ENCODE measurements at regions of chr2 and their contacts with region 1.

Region 1: DNA sequence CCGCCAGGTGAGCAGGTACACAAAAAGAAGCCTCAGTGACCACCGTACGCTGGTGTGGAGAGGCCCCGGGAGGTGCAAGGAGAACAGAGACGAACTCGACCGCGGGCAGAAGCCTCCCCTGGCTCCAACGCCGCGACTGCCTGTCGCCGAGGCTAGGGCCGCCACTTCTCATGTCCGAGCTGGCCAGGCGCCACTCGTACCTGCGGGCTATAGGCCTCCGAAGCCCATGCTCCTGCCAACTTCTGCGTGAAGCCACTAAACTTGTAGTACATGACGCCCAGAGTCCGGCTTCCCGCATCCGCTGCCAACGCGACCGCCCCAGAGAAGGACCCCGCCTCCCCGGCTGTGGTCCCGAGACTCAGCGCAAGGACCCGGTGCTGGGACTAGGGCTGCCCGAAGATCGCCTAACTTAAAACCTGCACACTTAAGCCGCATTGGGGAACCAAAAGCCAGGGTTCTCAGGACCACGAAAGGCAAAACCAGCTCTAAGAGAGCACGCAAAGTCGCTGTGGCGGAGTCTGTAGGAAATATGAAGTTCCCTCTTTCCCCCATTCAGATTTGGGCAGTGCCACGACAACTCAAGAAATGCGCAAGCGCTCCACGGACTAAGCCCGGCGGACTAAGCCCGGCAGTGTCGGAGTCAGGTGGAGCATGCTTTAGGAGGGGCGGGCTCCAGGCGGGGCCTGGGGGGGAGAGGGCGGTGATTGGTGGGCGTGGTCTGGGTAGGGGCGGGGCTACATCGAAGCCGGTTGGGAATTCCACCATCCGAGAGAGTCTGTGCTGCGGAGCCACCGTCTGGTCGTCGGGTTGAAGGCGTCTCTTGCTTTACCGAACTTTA is at the start of gene COX7A2L:
- DNase-seq: peak; percentile 98
- H3K4me3 Mint-ChIP-seq: peak within 1 kb of the TSS; percentile 83
- H3K27ac Mint-ChIP-seq: peak within 1 kb of the TSS; percentile 98
- H3K4me1 Mint-ChIP-seq: peaks cover 42% of the 10 kb centered on the region
- H3K27me3 Mint-ChIP-seq: no peaks in the 10 kb centered on the region
- total RNA-seq, gene COX7A2L: 150 to 152 TPM

Region 2: GRCh38 chr2:42047488-42048298 is 313.4 kb before region 1 on chr2 and contains the start of gene PKDCC:
- CTCF ChIA-PET with region 1: no interaction called
- intact Hi-C with region 1: loop called (anchors 1 kb)
- DNase-seq: no peak
- H3K4me3 Mint-ChIP-seq: peak within 1 kb of the TSS; percentile 57
- H3K27ac Mint-ChIP-seq: no peak within 1 kb of the TSS
- H3K4me1 Mint-ChIP-seq: peaks cover 5% of the 10 kb centered on the region
- H3K27me3 Mint-ChIP-seq: peaks cover 59% of the 10 kb centered on the region
- total RNA-seq, gene PKDCC: not detected

Region 3: DNA sequence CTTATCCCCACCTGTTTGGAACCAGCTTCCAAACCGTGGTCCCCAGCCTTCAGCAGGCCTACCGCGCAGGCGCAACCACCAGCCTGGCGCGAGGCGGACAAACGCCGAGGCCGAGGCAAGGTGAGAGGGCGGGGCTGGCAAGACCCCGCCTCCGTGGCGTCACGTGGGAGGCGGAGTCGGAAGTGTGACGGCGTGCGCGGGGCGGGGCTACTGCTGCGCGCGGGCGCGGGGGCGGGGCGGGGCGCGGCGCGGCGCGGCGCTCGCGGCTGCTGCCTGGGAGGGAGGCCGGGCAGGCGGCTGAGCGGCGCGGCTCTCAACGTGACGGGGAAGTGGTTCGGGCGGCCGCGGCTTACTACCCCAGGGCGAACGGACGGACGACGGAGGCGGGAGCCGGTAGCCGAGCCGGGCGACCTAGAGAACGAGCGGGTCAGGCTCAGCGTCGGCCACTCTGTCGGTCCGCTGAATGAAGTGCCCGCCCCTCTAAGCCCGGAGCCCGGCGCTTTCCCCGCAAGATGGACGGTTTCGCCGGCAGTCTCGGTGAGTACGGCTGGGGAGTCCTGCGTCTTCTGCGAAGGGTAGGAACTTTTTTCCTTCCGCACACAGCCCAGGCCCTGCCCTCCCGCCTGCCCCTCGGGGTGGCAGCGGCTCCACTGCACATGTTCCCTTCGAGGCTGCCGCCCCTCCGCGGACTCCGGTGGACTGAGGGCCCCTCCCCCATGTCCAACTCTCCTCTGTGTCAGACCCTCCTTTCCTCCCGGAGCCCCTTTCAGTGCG is 191.8 kb before region 1 on chr2 and contains the start of gene EML4:
- CTCF ChIA-PET with region 1: no interaction called
- intact Hi-C with region 1: loop called (anchors 1 kb)
- DNase-seq: peak; percentile 89
- H3K4me3 Mint-ChIP-seq: no peak within 1 kb of the TSS
- H3K27ac Mint-ChIP-seq: peak within 1 kb of the TSS; percentile 70
- H3K4me1 Mint-ChIP-seq: peaks cover 24% of the 10 kb centered on the region
- H3K27me3 Mint-ChIP-seq: no peaks in the 10 kb centered on the region
- total RNA-seq, gene EML4: 65.8 to 65.9 TPM

Region 4: DNA sequence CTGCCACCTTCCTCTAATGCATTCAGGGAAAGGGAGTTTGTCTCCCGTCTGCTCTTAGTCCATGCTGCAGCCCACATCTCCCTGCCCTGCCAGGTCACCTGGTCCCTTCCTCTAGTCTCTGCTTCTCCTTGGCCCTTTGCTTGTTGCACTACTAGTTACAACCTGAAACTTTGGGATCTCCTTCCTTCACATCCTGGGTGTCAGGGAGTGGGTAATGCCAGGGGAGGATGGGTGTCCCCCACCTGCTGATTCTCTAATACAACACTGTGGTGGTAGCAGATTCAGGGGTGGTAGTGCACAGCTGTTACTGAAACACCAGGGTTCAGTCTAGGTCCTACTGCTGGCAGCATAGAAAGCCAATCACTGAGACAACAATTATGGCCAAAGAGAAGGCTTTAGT is 31.1 kb after region 1 on chr2:
- CTCF ChIA-PET with region 1: no interaction called
- intact Hi-C with region 1: no loop called
- DNase-seq: no peak
- H3K4me3 Mint-ChIP-seq: no peak overlapping the region
- H3K27ac Mint-ChIP-seq: no peak overlapping the region
- H3K4me1 Mint-ChIP-seq: no peaks in the 10 kb centered on the region
- H3K27me3 Mint-ChIP-seq: no peaks in the 10 kb centered on the region

Region 5: GRCh38 chr2:42421601-42422252 is 60.6 kb after region 1 on chr2:
- CTCF ChIA-PET with region 1: no interaction called
- intact Hi-C with region 1: loop called (anchors 1 kb)
- DNase-seq: no peak
- H3K4me3 Mint-ChIP-seq: no peak overlapping the region
- H3K27ac Mint-ChIP-seq: no peak overlapping the region
- H3K4me1 Mint-ChIP-seq: peaks cover 29% of the 10 kb centered on the region
- H3K27me3 Mint-ChIP-seq: peaks cover 7% of the 10 kb centered on the region

Region 6: GRCh38 chr2:42663106-42663780 is 302.1 kb after region 1 on chr2:
- CTCF ChIA-PET with region 1: interaction called, 3 read pairs
- intact Hi-C with region 1: loop called (anchors 2 kb)
- DNase-seq: peak; percentile 80
- H3K4me3 Mint-ChIP-seq: no peak overlapping the region
- H3K27ac Mint-ChIP-seq: peak overlapping the region; percentile 57
- H3K4me1 Mint-ChIP-seq: peaks cover 17% of the 10 kb centered on the region
- H3K27me3 Mint-ChIP-seq: no peaks in the 10 kb centered on the region

Measured in activated naive CD4-positive, alpha-beta T cell treated with anti-CD3 and anti-CD28 coated beads for 36 hours (primary cell).